Right cardiac atrium (tissue), 5 donors: ENCODE measurements at regions of chr1 and their contacts with region 1.

Region 1: DNA sequence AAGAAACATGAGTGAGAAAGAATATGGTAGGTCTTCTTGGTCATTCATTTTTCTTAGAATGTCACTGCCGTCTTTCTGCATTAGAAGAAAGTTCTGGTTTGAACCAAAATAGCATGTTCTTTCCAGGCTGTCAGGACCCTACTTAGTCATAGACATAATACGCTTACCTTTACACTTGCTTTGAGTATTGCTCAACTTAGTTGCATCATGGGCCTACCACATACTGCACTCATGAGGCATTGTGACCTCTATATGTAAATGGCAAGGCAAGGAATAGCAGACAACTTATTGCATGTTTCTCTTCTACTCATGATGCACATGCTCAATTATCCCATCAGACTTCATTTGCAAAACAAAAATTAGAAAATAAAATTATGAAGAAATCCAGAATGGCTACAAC is 415.0 kb downstream of the HLX start:
- DNase-seq: no peak
- ATAC-seq: no peak
- H3K4me3 ChIP-seq: no peak overlapping the region
- H3K27ac ChIP-seq: no peak overlapping the region
- H3K4me1 ChIP-seq: no peaks in the 10 kb centered on the region
- H3K27me3 ChIP-seq: no peaks in the 10 kb centered on the region

Region 2: GRCh38 chr1:222438661-222439060 is 1144.4 kb after region 1 on chr1:
- intact Hi-C with region 1: loop called in 1 of 4 experiments (anchors 10 kb)
- DNase-seq: no peak
- ATAC-seq: no peak
- H3K4me3 ChIP-seq: no peak overlapping the region
- H3K27ac ChIP-seq: no peak overlapping the region
- H3K4me1 ChIP-seq: peaks cover 2% of the 10 kb centered on the region
- H3K27me3 ChIP-seq: no peaks in the 10 kb centered on the region